ENCODE measurements at regions of chr16 and their contacts with region 1.

Region 1: GRCh38 chr16:69123910-69124309 is 8.5 kb downstream of the CHTF8 start:
- DNase-seq: peak; percentile 74
- H3K4me3 Mint-ChIP-seq: no peak overlapping the region
- H3K27ac Mint-ChIP-seq: no peak overlapping the region
- H3K4me1 Mint-ChIP-seq: peaks cover 18% of the 10 kb centered on the region
- H3K27me3 Mint-ChIP-seq: no peaks in the 10 kb centered on the region

Region 2: GRCh38 chr16:69112285-69113129 is 11.4 kb before region 1 on chr16:
- CTCF ChIA-PET with region 1: interaction called, 36 read pairs
- intact Hi-C with region 1: no loop called
- DNase-seq: peak; percentile 65
- H3K4me3 Mint-ChIP-seq: no peak overlapping the region
- H3K27ac Mint-ChIP-seq: no peak overlapping the region
- H3K4me1 Mint-ChIP-seq: peaks cover 7% of the 10 kb centered on the region
- H3K27me3 Mint-ChIP-seq: peaks cover 6% of the 10 kb centered on the region

Region 3: GRCh38 chr16:69435977-69436820 is 312.3 kb after region 1 on chr16:
- CTCF ChIA-PET with region 1: no interaction called
- intact Hi-C with region 1: no loop called
- DNase-seq: no peak
- H3K4me3 Mint-ChIP-seq: no peak overlapping the region
- H3K27ac Mint-ChIP-seq: peak overlapping the region; percentile 14
- H3K4me1 Mint-ChIP-seq: peaks cover 79% of the 10 kb centered on the region
- H3K27me3 Mint-ChIP-seq: no peaks in the 10 kb centered on the region